IMR-90 (cell line): ENCODE measurements at regions of chr5 and their contacts with region 1.

Region 1: GRCh38 chr5:8462565-8462964 is 593.6 kb downstream of the MTRR start:
- DNase-seq: no peak
- ATAC-seq: no peak
- H3K4me3 ChIP-seq: no peak overlapping the region
- H3K27ac ChIP-seq: no peak overlapping the region
- H3K4me1 ChIP-seq: no peaks in the 10 kb centered on the region
- H3K27me3 ChIP-seq: no peaks in the 10 kb centered on the region
- CTCF ChIP-seq: no peak
- POLR2A ChIP-seq: no peak
- RAD21 ChIP-seq: no peak

Region 2: GRCh38 chr5:8508231-8508630 is 45.7 kb after region 1 on chr5:
- CTCF ChIA-PET with region 1: no interaction called
- POLR2A ChIA-PET with region 1: no interaction called
- dilution Hi-C with region 1: no loop called
- in situ Hi-C with region 1: no loop called
- intact Hi-C with region 1: loop called (anchors 1 kb)
- DNase-seq: peak; percentile 35
- ATAC-seq: no peak
- H3K4me3 ChIP-seq: no peak overlapping the region
- H3K27ac ChIP-seq: no peak overlapping the region
- H3K4me1 ChIP-seq: no peaks in the 10 kb centered on the region
- H3K27me3 ChIP-seq: no peaks in the 10 kb centered on the region
- CTCF ChIP-seq: no peak
- POLR2A ChIP-seq: no peak
- RAD21 ChIP-seq: no peak

Region 3: GRCh38 chr5:8522646-8523045 is 60.1 kb after region 1 on chr5:
- CTCF ChIA-PET with region 1: no interaction called
- POLR2A ChIA-PET with region 1: no interaction called
- dilution Hi-C with region 1: no loop called
- in situ Hi-C with region 1: no loop called
- intact Hi-C with region 1: no loop called
- DNase-seq: no peak
- ATAC-seq: no peak
- H3K4me3 ChIP-seq: no peak overlapping the region
- H3K27ac ChIP-seq: no peak overlapping the region
- H3K4me1 ChIP-seq: no peaks in the 10 kb centered on the region
- H3K27me3 ChIP-seq: no peaks in the 10 kb centered on the region
- CTCF ChIP-seq: no peak
- POLR2A ChIP-seq: no peak
- RAD21 ChIP-seq: no peak